ENCODE measurements at regions of chr7 and their contacts with region 1.

Region 1: GRCh38 chr7:131546583-131547111 is 9.8 kb downstream of the PODXL start:
- DNase-seq: no peak
- ATAC-seq: no peak
- H3K4me3 ChIP-seq: no peak overlapping the region; a peak in 1 of 4 replicates
- H3K27ac ChIP-seq: no peak overlapping the region
- H3K4me1 ChIP-seq: peaks cover 8% of the 10 kb centered on the region
- H3K27me3 ChIP-seq: no peaks in the 10 kb centered on the region
- CTCF ChIP-seq: peak; percentile 85

Region 2: GRCh38 chr7:131346885-131347592 is 199.6 kb before region 1 on chr7:
- CTCF ChIA-PET with region 1: interaction called, 13 read pairs
- POLR2A ChIA-PET with region 1: no interaction called
- in situ Hi-C with region 1: no loop called
- intact Hi-C with region 1: no loop called
- DNase-seq: no peak
- ATAC-seq: no peak
- H3K4me3 ChIP-seq: no peak overlapping the region
- H3K27ac ChIP-seq: no peak overlapping the region
- H3K4me1 ChIP-seq: peaks cover 5% of the 10 kb centered on the region; the same call in 1 of the 2 replicates
- H3K27me3 ChIP-seq: no peaks in the 10 kb centered on the region
- CTCF ChIP-seq: no peak

Region 3: DNA sequence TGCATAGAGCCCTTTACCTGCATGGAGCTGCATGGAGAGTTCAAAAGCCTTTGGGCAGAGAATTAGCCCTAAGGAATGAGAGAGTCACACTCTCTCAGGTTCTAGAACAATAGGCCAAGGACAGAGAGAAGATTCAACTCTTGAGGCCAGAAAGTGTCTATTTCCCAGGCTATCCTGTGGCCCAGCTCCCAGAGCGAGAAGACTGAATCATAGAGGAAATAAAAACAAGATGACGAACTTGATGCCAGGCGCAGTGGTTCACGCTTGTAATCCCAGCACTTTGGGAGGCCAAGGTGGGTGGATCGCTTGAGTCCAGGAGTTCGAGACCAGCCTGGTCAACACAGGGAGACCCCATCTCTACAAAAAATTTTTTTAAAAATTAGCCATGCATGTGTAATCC is 28.1 kb after region 1 on chr7:
- CTCF ChIA-PET with region 1: interaction called, 10 read pairs
- POLR2A ChIA-PET with region 1: no interaction called
- in situ Hi-C with region 1: no loop called
- intact Hi-C with region 1: no loop called
- DNase-seq: no peak
- ATAC-seq: no peak
- H3K4me3 ChIP-seq: no peak overlapping the region
- H3K27ac ChIP-seq: no peak overlapping the region
- H3K4me1 ChIP-seq: no peaks in the 10 kb centered on the region
- H3K27me3 ChIP-seq: no peaks in the 10 kb centered on the region
- CTCF ChIP-seq: no peak

Region 4: DNA sequence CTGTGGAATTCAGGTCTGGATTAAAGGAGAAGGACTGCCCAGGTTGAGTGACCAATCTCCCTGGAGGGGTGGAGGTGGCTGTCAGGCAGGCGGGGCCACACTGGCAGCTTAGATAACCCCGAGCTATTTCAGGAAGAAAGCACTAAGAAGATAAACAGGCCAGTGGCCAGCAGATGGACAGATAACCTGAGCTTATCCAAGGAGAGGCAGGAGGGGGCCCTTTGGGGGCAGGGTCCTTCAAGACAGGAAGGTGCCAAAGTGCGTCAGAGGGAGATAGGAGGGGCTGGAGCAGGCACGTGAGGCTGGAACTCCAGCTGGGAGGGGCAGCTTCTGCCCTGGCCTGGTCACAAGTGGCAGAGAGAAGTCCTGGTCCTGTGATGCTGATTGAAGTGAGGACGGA is 39.6 kb after region 1 on chr7:
- CTCF ChIA-PET with region 1: interaction called, 19 read pairs
- POLR2A ChIA-PET with region 1: no interaction called
- in situ Hi-C with region 1: no loop called
- intact Hi-C with region 1: no loop called
- DNase-seq: no peak
- ATAC-seq: no peak
- H3K4me3 ChIP-seq: no peak overlapping the region
- H3K27ac ChIP-seq: no peak overlapping the region
- H3K4me1 ChIP-seq: no peaks in the 10 kb centered on the region
- H3K27me3 ChIP-seq: no peaks in the 10 kb centered on the region
- CTCF ChIP-seq: no peak

Measured in Panc1 (cell line).